Activated CD4-positive, alpha-beta T cell treated with anti-CD3 and anti-CD28 coated beads, Interleukin-2, amount 10 ng/mL, durations not matched to agents 24 days and 14 days (primary cell): ENCODE measurements at regions of chr9 and their contacts with region 1.

Region 1: DNA sequence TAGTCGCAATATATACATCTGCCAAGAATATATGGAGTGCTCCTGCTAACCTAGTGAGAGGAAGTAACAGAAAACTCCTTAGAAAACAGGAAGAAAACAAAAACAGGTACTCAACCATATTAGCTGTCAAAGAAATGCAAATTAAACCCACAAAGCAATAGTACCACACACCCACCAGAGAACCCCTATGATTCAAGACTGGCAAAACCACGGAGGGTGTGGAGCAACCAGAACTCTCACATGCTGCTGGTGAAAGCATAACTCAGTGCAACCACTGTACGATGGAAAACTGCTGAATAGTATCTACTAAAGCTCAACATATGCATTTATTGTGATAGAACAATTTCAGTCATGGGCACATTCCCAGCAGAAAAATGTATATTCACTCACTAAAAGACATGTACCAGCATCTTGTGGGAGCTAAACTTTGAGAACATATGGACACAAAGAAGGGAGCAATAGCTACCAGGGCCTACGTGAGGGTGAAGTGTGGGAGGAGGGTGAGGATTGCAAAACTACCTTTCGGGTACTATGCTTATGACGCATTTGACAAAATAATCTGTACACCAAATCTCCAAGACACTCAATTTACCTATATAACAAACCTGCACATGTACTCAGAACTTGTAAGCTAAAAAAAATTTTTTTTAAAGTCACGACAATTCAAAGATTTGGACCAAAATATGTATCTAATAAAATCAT is 34.0 kb downstream of the PTPN3 start:
- DNase-seq: peak; percentile 77
- H3K4me3 Mint-ChIP-seq: no peak overlapping the region
- H3K27ac Mint-ChIP-seq: peak overlapping the region; percentile 88
- H3K4me1 Mint-ChIP-seq: peaks cover 45% of the 10 kb centered on the region
- H3K27me3 Mint-ChIP-seq: peaks cover 9% of the 10 kb centered on the region

Region 2: DNA sequence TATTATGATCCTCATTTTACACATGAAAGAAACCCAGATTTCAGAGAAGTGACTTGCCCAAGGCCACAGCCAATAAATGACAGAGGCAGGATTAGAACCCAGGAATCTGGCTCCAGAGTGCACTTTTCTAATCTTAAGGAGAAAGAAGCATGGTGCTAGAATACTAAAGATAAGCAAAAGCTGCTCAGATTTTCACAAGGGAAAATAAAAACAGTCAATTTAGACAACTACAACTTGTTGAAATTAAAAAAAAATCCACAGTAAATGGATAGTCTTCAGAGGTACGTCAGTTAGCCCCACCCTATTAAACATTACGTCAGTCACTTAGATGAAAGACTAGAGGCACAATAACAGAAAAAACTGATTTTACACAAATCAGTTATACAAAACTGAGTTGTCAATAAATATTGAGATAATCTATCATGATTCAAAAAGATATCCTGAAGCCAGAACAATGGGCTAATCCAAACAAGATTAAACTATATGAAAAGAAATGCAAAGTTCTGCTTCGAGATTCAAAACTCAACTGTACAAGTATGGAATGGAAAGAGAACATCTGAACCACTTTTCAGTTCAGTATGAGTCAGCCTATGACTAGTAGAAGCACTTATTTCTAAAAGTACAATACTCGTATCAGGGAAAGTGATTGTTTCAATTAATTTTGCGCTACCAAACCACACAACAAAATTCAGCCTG is 353.6 kb before region 1 on chr9:
- intact Hi-C with region 1: loop called (anchors 5 kb)
- DNase-seq: no peak
- H3K4me3 Mint-ChIP-seq: peak overlapping the region; percentile 66
- H3K27ac Mint-ChIP-seq: peak overlapping the region; percentile 87
- H3K4me1 Mint-ChIP-seq: peaks cover 54% of the 10 kb centered on the region
- H3K27me3 Mint-ChIP-seq: no peaks in the 10 kb centered on the region

Region 3: DNA sequence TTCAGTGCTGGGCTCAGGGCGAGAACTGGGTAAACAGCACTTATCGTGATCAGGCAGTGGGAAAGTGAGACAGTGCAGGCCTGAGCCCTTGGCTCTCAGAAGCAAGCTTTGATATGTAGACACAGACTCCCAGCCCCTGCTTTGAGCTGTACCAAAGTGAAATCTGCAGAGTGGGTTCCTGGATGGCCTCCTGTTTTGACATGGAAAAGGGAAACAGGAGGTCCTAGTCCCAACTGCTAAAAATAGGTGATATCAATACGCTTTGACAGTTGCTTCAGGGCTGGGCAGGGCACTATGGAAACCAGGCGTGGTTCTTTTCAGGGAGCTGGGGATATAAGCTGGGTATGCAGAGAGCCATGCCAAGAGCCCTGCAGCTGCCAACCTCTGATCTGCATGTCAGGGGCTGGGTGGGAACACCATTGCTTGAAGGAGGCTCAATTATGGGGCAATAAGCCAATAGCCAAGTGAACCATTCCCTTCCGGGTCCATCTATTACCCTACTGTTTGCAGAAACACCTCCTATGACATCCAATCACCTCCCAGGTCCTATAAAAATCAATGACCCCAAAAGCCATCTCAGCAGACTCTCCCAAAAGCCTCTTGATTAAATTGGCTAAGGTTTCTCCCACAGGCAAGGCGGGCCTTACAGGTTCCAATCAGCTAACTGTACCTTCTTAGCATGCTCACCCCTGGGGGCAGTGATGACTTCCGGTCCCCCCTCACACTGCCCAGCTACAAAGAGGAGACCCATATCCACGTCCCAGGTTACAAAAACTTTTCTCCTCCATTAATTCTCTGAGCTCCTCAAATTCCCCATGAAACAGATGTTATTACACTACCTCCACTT is 189.0 kb before region 1 on chr9:
- intact Hi-C with region 1: no loop called
- DNase-seq: no peak
- H3K4me3 Mint-ChIP-seq: no peak overlapping the region
- H3K27ac Mint-ChIP-seq: no peak overlapping the region
- H3K4me1 Mint-ChIP-seq: no peaks in the 10 kb centered on the region
- H3K27me3 Mint-ChIP-seq: peaks cover 13% of the 10 kb centered on the region

Region 4: GRCh38 chr9:109440797-109441287 is 23.2 kb before region 1 on chr9:
- intact Hi-C with region 1: loop called (anchors 1 kb)
- DNase-seq: peak; percentile 92
- H3K4me3 Mint-ChIP-seq: no peak overlapping the region
- H3K27ac Mint-ChIP-seq: peak overlapping the region; percentile 83
- H3K4me1 Mint-ChIP-seq: peaks cover 18% of the 10 kb centered on the region
- H3K27me3 Mint-ChIP-seq: peaks cover 22% of the 10 kb centered on the region

Region 5: GRCh38 chr9:109447329-109448076 is 16.6 kb before region 1 on chr9:
- intact Hi-C with region 1: loop called (anchors 1 kb)
- DNase-seq: peak; percentile 75
- H3K4me3 Mint-ChIP-seq: peak overlapping the region; percentile 57
- H3K27ac Mint-ChIP-seq: peak overlapping the region; percentile 88
- H3K4me1 Mint-ChIP-seq: peaks cover 27% of the 10 kb centered on the region
- H3K27me3 Mint-ChIP-seq: peaks cover 6% of the 10 kb centered on the region

Region 6: DNA sequence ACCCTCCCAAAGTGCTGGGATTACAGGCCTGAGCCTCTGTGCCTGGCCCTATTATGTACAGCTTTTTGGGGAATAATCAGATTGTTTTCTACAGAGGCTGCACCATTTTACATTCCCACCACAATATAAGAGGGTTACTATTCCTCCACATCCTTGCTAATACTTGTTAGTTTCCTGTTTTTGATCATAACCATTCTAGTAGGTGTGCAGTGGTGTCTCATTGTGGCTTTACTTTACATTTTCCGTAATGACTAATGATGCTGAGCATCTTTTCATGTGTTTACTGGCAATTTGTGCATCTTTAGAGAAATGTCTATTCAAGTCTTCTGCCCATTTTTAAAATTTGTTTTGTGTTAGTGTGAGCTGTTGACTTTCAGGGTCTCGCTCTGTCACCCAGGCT is 15.7 kb after region 1 on chr9:
- intact Hi-C with region 1: loop called (anchors 1 kb)
- DNase-seq: no peak
- H3K4me3 Mint-ChIP-seq: peak overlapping the region; percentile 48
- H3K27ac Mint-ChIP-seq: peak overlapping the region; percentile 90
- H3K4me1 Mint-ChIP-seq: peaks cover 41% of the 10 kb centered on the region
- H3K27me3 Mint-ChIP-seq: peaks cover 4% of the 10 kb centered on the region

Region 7: GRCh38 chr9:109843641-109844040 is 379.6 kb after region 1 on chr9:
- intact Hi-C with region 1: no loop called
- DNase-seq: no peak
- H3K4me3 Mint-ChIP-seq: no peak overlapping the region
- H3K27ac Mint-ChIP-seq: no peak overlapping the region
- H3K4me1 Mint-ChIP-seq: no peaks in the 10 kb centered on the region
- H3K27me3 Mint-ChIP-seq: peaks cover 6% of the 10 kb centered on the region

Region 8: DNA sequence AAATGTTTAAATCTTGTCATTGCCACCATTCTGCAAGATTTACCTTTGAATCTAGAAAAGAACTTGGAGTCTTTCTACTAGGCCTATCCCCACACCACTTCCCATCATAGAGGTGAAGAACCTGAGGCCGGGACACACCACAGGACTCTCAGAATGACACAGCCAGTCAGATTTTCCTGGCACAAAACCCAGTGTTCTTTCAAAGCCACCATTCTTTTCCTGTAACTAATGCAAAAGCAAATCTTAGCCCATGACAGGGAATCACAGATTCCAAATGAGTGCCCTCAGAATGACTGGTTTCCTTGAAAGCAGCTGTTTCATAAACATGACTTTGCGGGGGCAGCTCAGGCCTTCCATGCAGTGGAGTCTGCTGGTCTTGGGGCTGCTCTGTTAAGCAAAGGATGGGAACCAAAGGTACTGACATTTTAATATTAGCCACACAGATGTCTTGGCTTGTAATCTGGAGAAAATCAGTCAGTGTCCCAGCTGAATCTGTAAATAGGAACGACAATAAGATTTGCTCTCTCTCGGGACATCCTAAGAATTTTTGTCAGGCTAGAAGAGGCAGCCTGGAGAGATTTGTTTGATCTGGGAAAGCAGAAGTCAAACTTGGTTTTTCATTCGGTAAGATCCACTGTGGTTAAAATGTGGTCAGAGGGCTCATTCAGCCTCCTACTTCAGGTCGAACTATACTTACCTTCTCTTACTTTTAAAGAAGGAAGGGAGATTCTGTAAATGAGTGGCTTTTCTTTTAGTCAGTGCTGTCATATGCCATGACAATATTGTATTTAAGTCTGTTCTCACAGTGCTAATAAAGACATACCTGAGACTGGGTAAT is 431.1 kb after region 1 on chr9:
- intact Hi-C with region 1: loop called (anchors 1 kb)
- DNase-seq: peak; percentile 80
- H3K4me3 Mint-ChIP-seq: peak overlapping the region; percentile 56
- H3K27ac Mint-ChIP-seq: peak overlapping the region; percentile 92
- H3K4me1 Mint-ChIP-seq: peaks cover 53% of the 10 kb centered on the region
- H3K27me3 Mint-ChIP-seq: no peaks in the 10 kb centered on the region